ENCODE measurements at regions of chr12 and their contacts with region 1.

Region 1: GRCh38 chr12:114013575-114014345 is 47.6 kb upstream of the RBM19 start:
- DNase-seq: no peak
- ATAC-seq: no peak
- H3K4me3 ChIP-seq: no peak overlapping the region
- H3K27ac ChIP-seq: no peak overlapping the region
- H3K4me1 ChIP-seq: no peaks in the 10 kb centered on the region
- H3K27me3 ChIP-seq: no peaks in the 10 kb centered on the region

Region 2: GRCh38 chr12:113980537-113981337 is 33.0 kb before region 1 on chr12:
- intact Hi-C with region 1: no loop called
- DNase-seq: peak in 1 of 3 donors; percentile 20
- ATAC-seq: peak in 1 of 2 donors; percentile 60
- H3K4me3 ChIP-seq: no peak overlapping the region
- H3K27ac ChIP-seq: no peak overlapping the region
- H3K4me1 ChIP-seq: no peaks in the 10 kb centered on the region
- H3K27me3 ChIP-seq: no peaks in the 10 kb centered on the region

Region 3: GRCh38 chr12:114131824-114132223 is 118.1 kb after region 1 on chr12:
- intact Hi-C with region 1: loop called in 1 of 4 experiments (anchors 10 kb)
- DNase-seq: no peak
- ATAC-seq: no peak
- H3K4me3 ChIP-seq: no peak overlapping the region
- H3K27ac ChIP-seq: no peak overlapping the region
- H3K4me1 ChIP-seq: no peaks in the 10 kb centered on the region
- H3K27me3 ChIP-seq: no peaks in the 10 kb centered on the region